ENCODE measurements at regions of chr11 and their contacts with region 1.

Region 1: DNA sequence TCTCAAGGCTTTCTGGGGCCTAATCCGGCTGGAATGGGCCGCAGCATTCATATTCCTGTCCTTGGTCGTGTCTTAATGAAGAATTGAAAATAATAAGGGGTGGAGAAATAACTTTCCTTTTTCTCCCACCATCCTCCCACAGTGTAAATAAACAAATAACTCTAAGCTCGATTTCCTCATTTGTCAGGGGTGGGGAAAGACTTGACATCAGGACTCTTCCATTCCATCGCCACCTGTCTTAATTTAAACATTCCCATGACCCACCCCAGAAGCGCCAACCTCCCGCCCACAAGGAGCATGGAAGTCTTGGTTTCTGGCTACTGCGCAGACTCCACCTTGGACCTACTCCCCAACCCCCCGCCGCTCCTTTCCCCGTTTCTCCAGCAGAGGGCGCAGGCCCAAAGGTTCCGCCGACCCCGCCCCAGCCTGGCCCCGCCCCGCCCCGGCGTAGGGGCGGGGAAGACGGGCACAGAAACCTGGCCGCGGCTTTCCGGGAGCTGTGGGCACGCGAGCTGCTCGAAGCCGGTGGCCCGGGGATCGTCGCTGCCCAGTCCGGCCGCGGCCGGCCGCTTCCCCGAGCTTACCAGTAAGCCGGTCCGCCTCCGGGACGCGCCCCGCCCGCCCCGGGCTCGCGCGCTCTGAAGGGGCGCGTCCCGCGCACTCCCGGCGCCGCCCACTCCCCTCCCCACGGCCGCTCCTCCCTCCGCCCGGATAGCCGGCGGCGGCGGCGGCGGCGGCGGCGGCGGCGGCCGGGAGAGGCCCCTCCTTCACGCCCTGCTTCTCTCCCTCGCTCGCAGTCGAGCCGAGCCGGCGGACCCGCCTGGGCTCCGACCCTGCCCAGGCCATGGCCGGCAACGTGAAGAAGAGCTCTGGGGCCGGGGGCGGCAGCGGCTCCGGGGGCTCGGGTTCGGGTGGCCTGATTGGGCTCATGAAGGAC is at the start of gene CBL:
- DNase-seq: peak; percentile 89
- H3K4me3 Mint-ChIP-seq: peak within 1 kb of the TSS; percentile 98
- H3K27ac Mint-ChIP-seq: peak within 1 kb of the TSS; percentile 97
- H3K4me1 Mint-ChIP-seq: peaks cover 28% of the 10 kb centered on the region
- H3K27me3 Mint-ChIP-seq: no peaks in the 10 kb centered on the region
- total RNA-seq, gene CBL: 38.1 and 39.9 TPM in 2 replicates

Region 2: DNA sequence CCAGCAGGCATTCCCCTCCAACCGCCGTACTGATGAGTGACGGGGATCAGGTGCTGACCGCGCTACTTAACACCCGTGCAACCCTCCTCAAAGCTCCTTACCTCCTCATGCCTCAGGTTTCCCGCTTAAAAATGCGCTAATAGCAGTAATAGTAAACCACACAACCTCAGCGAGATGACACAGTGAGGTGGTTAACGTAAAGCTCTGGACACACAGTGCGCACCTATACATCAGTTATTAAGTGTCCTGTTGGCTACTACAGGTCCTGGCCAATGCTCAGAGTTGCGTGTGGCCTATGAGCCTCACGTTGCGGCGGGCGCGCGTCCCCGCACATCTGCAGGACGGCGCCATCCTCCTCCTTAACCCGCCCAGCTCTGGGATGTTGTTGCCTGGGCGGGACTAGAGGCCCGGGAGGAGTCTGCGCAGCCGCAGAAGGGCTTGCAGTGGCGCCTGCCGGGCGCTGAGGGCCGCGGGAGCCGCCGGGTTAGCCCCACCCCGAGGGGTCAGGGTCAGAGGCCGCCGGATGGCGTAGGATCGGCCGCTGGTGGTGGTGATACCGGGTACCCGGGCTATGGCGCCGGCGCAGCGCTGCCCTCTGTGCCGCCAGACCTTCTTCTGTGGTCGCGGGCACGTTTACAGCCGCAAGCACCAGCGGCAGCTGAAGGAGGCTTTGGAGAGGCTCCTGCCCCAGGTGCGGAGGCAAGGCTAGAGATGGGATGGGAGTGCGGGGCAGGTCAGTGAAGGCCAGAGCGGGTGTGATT is 208.0 kb before region 1 on chr11 and contains the start of gene CENATAC:
- intact Hi-C with region 1: loop called (anchors 5 kb)
- DNase-seq: peak; percentile 96
- H3K4me3 Mint-ChIP-seq: peak within 1 kb of the TSS; percentile 96
- H3K27ac Mint-ChIP-seq: peak within 1 kb of the TSS; percentile 97
- H3K4me1 Mint-ChIP-seq: peaks cover 27% of the 10 kb centered on the region
- H3K27me3 Mint-ChIP-seq: no peaks in the 10 kb centered on the region
- total RNA-seq, gene CENATAC: 50.1 and 53.6 TPM in 2 replicates

Region 3: DNA sequence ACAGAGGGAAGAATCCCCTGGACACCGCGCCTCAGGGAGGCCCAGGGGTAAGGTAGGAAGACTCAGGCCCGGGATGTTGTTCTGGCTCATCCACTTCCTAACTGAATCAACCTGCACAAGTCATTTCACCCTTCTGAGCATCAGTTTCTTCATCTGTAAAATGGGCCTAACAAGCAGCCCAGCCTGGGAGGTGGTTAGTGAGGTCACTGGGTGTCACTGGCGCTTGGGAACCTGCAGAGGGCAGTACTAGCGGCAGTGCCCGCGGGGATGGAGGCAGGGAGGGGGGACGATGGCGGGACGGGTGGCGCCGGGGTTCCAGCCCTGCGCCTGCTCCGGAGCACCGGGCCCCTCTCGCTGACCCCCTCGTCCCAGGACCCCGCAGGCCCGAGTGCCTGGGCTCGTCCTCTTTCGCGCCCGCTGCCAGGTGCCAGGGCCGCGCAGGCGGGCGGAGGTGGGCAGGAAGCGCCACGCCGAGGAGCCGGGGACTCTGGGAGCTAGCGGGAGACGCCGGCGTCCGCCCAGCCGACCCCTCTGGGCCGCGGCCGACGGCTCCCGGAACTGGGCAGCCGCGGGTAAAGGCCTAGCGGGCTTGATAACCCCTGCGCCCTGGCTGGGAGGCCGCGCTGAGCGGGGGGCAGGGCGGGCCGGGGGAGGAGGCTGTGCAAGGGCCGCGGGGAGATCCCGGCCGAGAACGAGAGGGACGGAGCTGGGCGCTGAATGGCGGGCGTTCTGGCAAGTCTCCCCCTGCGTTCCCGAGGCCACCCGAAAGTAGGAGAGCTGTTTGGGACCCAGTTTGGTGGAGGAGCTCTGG is 37.2 kb before region 1 on chr11 and contains the start of gene NLRX1:
- intact Hi-C with region 1: loop called (anchors 2 kb)
- DNase-seq: peak; percentile 77
- H3K4me3 Mint-ChIP-seq: peak within 1 kb of the TSS; percentile 92
- H3K27ac Mint-ChIP-seq: peak within 1 kb of the TSS; percentile 94
- H3K4me1 Mint-ChIP-seq: peaks cover 24% of the 10 kb centered on the region
- H3K27me3 Mint-ChIP-seq: peaks cover 2% of the 10 kb centered on the region
- total RNA-seq, gene NLRX1: 24.1 and 29.5 TPM in 2 replicates

Region 4: DNA sequence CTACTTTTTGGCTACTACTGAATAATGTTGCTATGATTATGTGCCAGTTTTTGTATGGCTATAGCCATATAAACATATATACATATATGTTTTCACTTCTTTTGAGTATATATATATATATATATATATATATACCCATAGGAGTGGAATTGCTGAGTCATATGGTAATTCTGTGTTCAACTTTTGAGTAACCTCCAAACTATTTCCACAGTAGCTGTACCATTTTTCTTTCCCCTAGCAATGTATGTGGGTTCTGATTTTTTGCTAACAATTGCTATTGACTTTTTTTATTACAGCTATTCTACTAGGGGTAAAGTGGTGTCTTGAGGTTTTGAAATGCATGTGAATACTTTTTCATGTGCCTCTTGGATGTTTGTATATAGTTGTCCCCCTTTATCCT is 30.6 kb after region 1 on chr11:
- intact Hi-C with region 1: loop called (anchors 1 kb)
- DNase-seq: no peak
- H3K4me3 Mint-ChIP-seq: no peak overlapping the region
- H3K27ac Mint-ChIP-seq: peak overlapping the region; percentile 84
- H3K4me1 Mint-ChIP-seq: peaks cover 46% of the 10 kb centered on the region
- H3K27me3 Mint-ChIP-seq: no peaks in the 10 kb centered on the region

Region 5: DNA sequence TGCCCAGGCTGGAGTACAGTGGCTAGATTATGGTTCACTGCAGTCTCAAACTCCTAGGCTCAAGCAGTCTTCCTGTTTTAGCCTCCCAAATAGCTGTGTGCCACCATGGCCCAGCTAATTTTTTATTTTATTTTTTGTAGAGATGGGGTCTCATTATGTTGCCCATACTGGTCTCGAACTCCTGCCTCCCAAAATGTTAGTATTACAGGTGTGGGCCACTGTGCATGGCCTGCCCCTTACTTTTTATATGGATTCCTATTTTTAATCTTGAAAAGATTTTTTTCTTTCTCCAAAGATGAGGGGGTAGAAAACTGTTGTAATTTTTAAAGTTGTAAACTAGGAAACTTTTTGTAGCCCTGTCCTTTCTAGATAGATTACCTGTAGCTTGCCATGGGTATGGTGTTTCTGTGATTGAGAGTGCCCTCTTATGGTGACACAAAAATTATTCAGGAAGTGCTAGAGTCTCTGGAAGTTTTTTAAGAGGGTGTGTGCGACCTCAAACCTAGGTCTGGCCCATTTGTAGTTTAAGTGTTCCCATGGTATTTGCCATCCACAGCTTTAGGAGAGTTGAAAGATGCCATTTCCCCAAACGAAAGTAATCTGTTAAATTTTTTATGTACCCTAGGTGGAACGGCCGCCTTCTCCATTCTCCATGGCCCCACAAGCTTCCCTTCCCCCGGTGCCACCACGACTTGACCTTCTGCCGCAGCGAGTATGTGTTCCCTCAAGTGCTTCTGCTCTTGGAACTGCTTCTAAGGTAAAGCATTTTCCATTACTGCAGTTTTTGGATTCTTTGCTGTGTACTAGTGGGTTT is 78.7 kb after region 1 on chr11:
- intact Hi-C with region 1: loop called (anchors 1 kb)
- DNase-seq: no peak
- H3K4me3 Mint-ChIP-seq: no peak overlapping the region
- H3K27ac Mint-ChIP-seq: no peak overlapping the region
- H3K4me1 Mint-ChIP-seq: peaks cover 27% of the 10 kb centered on the region
- H3K27me3 Mint-ChIP-seq: no peaks in the 10 kb centered on the region

Measured in activated T-helper 1 cell treated with anti-CD3 and anti-CD28 coated beads, Interleukin-12 subunit alpha, Interleukin-12 subunit beta, Interleukin-2, Interleukin-4 antibody, amounts not matched to agents 30 ng/mL and 10 ng/mL and 1 ng/mL, durations not matched to agents 14 hours and 24 hours and 36 hours (primary cell).